CD4-positive, alpha-beta memory T cell (primary cell): ENCODE measurements at regions of chr9 and their contacts with region 1.

Region 1: DNA sequence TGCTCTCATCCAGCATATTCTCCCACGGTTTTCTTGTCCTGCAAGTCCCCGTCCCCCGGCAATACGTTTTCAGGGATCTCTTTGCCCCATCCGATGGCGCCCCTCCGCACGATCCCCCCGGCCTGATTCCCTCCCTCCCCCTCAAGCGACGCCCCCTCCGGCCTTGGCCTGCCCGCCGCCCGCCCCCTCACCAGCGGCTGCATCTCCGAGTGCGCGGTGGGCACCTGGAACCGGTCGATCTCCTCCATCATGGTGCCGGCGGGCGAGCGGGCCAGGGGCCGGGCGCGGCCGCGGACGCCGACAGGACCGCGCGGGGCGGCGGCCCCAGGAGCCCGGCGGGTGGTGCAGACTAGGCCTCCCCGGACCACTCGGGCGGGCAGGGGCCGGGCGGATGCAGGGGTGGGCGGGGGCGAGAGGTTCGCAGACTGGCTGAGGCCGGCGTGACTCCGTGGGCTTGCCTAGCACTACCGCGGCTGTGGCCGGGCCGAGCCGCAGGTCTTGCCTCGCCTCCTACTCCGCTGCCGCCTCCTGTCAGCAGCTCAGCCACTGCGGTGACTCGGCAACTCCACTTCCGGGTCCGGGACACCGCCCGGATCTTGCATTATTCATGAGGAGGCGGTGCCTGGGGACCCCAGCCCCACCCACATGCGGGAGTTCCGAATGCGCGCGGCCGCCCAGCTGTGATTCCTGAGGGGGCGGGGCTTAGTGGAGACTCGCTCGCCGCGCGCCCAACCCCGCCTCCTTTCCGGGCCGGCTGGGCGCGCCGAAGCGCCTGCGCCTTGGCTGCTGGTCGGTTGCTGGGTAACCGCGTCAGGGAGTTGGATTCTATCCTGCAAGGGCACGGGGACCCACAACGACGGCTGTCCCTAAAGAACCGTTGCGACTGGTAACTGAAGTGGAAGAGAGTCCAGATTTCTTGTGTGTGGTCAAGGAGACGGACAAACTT is at the starts of genes DNAI1 and FAM219A:
- DNase-seq: peak; percentile 98 to 100 (median 99)
- H3K4me3 ChIP-seq: peak within 1 kb of the TSS; percentile 44 to 61
- H3K4me3 Mint-ChIP-seq: peak within 1 kb of the TSS; percentile 90 to 95 (median 92)
- H3K27ac ChIP-seq: peak within 1 kb of the TSS; percentile 5
- H3K27ac Mint-ChIP-seq: peak within 1 kb of the TSS; percentile 49 to 90 (median 88)
- H3K4me1 ChIP-seq: peaks cover 19% of the 10 kb centered on the region
- H3K4me1 Mint-ChIP-seq: peaks cover 18 to 30% (median 24%) of the 10 kb centered on the region in 4 donors
- H3K27me3 ChIP-seq: no peaks in the 10 kb centered on the region
- H3K27me3 Mint-ChIP-seq: no peaks in the 10 kb centered on the region
- total RNA-seq, gene DNAI1: not detected
- total RNA-seq, gene FAM219A: 13.9 to 16.3 TPM

Region 2: GRCh38 chr9:34059281-34059680 is 399.0 kb before region 1 on chr9:
- CTCF ChIA-PET with region 1: no interaction called
- POLR2A ChIA-PET with region 1: no interaction called
- intact Hi-C with region 1: no loop called
- DNase-seq: no peak
- H3K4me3 ChIP-seq: no peak overlapping the region
- H3K4me3 Mint-ChIP-seq: no peak overlapping the region
- H3K27ac ChIP-seq: no peak overlapping the region
- H3K27ac Mint-ChIP-seq: no peak overlapping the region
- H3K4me1 ChIP-seq: no peaks in the 10 kb centered on the region
- H3K4me1 Mint-ChIP-seq: no peaks in the 10 kb centered on the region
- H3K27me3 ChIP-seq: no peaks in the 10 kb centered on the region
- H3K27me3 Mint-ChIP-seq: no peaks in the 10 kb centered on the region

Region 3: DNA sequence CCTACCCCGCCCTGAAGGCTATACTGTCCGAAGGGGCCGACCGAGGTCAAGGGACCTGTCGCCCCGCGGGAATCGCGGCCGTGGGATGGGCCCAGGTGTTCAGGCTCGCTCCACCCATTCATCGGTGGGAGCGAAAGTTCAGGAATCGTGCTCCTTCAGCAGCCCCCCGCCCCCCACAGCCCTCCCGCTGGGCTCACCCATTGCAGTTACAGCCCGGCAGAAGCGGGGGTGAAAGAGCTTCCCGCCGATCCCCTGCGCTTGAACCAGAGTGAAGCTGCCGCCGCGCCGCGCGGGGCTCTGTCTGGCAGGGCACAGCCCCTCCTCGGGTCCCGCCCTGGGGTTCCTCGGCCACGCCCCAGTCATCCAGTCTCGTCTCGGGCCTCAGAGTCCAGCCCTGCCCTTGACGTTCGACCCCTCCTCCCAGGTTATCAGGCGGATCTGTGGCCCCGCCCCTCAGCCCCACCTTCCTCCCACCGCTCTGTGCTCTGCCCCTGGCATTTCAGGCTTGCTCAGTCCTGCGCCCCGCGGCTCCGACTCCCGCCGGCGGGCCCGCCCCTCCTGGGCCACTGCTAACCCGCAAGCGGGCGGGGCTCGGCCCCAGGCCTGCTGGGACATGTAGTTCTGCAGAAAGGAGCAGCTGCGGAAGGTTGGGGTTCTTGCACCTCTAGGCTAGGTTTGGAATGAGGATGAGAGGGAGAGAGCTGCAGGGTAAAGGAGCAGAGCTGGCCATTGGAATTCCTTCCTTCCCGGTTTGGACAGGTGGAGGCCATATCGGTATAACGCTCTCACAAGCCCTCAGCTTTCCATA is 81.5 kb before region 1 on chr9 and contains the start of gene MYORG:
- CTCF ChIA-PET with region 1: no interaction called
- POLR2A ChIA-PET with region 1: interaction called, 6 read pairs
- intact Hi-C with region 1: loop called (anchors 1 kb)
- DNase-seq: peak; percentile 94 to 98 (median 96)
- H3K4me3 ChIP-seq: peak within 1 kb of the TSS; percentile 70 to 77
- H3K4me3 Mint-ChIP-seq: peak within 1 kb of the TSS; percentile 92 to 98 (median 94)
- H3K27ac ChIP-seq: peak within 1 kb of the TSS; percentile 49
- H3K27ac Mint-ChIP-seq: peak within 1 kb of the TSS; percentile 58 to 97 (median 93)
- H3K4me1 ChIP-seq: peaks cover 39% of the 10 kb centered on the region
- H3K4me1 Mint-ChIP-seq: peaks cover 33 to 54% (median 44%) of the 10 kb centered on the region in 4 donors
- H3K27me3 ChIP-seq: no peaks in the 10 kb centered on the region
- H3K27me3 Mint-ChIP-seq: no peaks in the 10 kb centered on the region
- total RNA-seq, gene MYORG: 1.3 to 1.4 TPM

Region 4: DNA sequence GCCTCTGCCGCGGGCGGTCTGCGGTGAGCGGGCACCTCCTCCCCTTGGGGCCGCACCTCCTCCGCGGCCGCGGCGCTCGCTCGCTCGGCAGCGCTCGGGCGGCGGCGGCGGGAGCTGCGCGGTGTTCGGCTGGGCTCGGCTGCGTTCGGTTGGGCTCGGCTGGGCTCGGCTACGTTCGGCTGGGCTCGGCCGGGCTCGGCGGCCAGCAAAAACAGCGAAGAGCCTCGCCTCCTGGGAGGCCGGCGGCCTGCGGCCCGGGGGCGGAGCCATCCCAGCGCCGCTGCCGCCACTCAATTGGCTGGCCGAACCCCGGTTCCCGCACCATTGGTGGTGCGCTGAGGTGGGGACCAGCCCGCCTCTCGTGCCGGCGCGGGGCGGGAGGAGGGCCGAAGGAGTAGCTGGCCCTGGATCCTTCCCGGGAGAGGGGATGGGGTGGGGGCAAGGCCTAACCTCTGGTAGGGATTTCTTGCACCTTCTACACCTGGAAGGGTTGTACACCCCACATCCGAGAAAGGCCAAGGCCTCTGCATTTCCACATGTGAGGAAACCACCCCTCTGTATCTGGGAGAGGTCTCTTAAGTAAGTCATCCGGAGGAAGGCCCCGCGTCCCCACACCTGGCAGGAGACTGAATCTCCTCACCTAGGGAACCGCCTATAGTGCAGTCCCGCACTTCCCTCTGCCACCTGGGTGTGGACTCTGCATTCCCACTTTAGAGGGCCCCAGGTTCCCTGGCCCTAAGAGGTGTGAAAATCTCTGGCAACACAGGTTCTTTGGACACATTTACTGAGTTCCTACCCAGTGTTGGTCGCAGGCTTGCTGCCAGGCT is 64.9 kb after region 1 on chr9 and contains the start of gene ENHO:
- CTCF ChIA-PET with region 1: no interaction called
- POLR2A ChIA-PET with region 1: interaction called, 8 read pairs
- intact Hi-C with region 1: loop called (anchors 1 kb)
- DNase-seq: peak; percentile 85 to 96 (median 91)
- H3K4me3 ChIP-seq: peak within 1 kb of the TSS; percentile 29 to 58
- H3K4me3 Mint-ChIP-seq: peak within 1 kb of the TSS; percentile 54 to 89 (median 81)
- H3K27ac ChIP-seq: peak within 1 kb of the TSS; percentile 44
- H3K27ac Mint-ChIP-seq: peak within 1 kb of the TSS in 5 of 7 donors; percentile 50 to 85 (median 68)
- H3K4me1 ChIP-seq: peaks cover 12% of the 10 kb centered on the region
- H3K4me1 Mint-ChIP-seq: peaks cover 6 to 13% (median 8%) of the 10 kb centered on the region in 4 donors
- H3K27me3 ChIP-seq: no peaks in the 10 kb centered on the region
- H3K27me3 Mint-ChIP-seq: peaks cover 1 to 5% of the 10 kb centered on the region in 2 donors
- total RNA-seq, gene ENHO: not detected

Region 5: GRCh38 chr9:34611829-34612630 is 153.7 kb after region 1 on chr9 and contains the start of gene RPP25L:
- CTCF ChIA-PET with region 1: no interaction called
- POLR2A ChIA-PET with region 1: no interaction called
- intact Hi-C with region 1: loop called (anchors 1 kb)
- DNase-seq: peak; percentile 83 to 89 (median 86)
- H3K4me3 ChIP-seq: peak within 1 kb of the TSS; percentile 81 to 88
- H3K4me3 Mint-ChIP-seq: peak within 1 kb of the TSS; percentile 87 to 99 (median 92)
- H3K27ac ChIP-seq: peak within 1 kb of the TSS; percentile 71
- H3K27ac Mint-ChIP-seq: peak within 1 kb of the TSS; percentile 83 to 97 (median 96)
- H3K4me1 ChIP-seq: peaks cover 19% of the 10 kb centered on the region
- H3K4me1 Mint-ChIP-seq: peaks cover 7 to 35% (median 25%) of the 10 kb centered on the region in 4 donors
- H3K27me3 ChIP-seq: no peaks in the 10 kb centered on the region
- H3K27me3 Mint-ChIP-seq: no peaks in the 10 kb centered on the region
- total RNA-seq, gene RPP25L: 28.5 to 28.9 TPM

Region 6: DNA sequence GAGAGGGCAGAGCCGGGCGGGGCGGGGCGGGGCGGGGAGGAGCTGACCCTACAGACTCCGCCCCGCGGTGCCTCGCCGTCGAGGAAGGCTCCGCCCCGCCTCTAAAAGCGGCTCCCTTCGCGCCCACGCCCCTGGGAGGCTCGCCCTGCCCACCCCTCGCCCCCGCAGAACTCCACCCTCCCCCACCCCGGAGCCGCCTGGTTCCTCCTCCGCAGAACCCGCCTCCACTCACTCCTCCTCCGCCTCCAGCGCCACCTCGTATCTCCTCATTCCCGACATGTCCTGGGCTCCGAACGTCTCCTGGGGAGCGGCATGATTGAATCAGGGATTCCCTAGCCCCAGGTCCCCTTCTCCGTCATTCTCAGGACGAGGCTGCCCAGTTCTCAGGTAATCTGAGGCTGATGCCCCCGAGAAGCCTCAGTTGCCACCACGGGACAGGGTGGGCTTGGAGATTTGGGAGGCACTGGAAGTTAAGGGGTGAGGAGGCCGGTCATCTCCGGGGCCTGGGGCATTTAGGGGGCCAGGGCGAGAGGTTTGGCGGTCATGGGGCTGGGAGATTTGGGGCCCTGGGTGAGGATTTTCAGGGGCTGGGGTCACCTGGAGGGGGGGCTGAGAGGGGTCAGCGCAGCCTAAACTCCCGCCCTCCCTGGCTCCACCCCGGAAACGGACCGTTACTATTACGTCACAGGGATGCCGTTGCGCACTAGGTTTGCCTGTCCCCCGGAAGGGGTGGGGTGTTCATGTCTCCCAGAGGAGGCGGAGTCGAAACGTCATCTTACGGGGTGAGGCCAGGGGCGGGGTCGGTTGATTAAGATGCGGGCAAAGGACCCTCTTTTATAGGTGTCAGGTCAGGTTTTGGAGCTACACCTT is 207.3 kb after region 1 on chr9:
- CTCF ChIA-PET with region 1: no interaction called
- POLR2A ChIA-PET with region 1: interaction called, 3 read pairs
- intact Hi-C with region 1: loop called (anchors 1 kb)
- DNase-seq: peak; percentile 87 to 94 (median 89)
- H3K4me3 ChIP-seq: peak overlapping the region; percentile 75 to 95
- H3K4me3 Mint-ChIP-seq: peak overlapping the region; percentile 85 to 97 (median 93)
- H3K27ac ChIP-seq: peak overlapping the region; percentile 98
- H3K27ac Mint-ChIP-seq: peak overlapping the region; percentile 95 to 99 (median 99)
- H3K4me1 ChIP-seq: peaks cover 59% of the 10 kb centered on the region
- H3K4me1 Mint-ChIP-seq: peaks cover 41 to 65% (median 53%) of the 10 kb centered on the region in 4 donors
- H3K27me3 ChIP-seq: no peaks in the 10 kb centered on the region
- H3K27me3 Mint-ChIP-seq: no peaks in the 10 kb centered on the region

Region 7: DNA sequence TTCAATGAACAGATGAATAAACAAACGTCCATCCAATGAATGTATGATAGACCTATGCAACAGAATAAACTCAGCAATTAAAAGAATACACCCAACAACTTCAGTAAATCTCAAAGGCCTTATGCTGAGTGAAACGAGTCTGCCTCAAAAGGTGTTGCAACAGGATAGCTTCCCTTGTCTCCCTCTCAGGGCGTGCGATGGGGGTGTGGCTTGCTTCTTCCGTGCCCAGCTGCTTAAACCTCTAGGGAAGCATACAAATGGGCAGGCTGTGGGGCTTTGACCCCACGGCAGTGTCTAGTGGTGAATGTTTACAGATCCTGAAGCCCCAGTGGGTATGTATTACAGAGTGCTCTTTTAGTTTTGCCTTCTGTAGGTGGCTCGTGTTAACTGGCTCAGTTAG is 338.6 kb after region 1 on chr9:
- CTCF ChIA-PET with region 1: no interaction called
- POLR2A ChIA-PET with region 1: no interaction called
- intact Hi-C with region 1: no loop called
- DNase-seq: no peak
- H3K4me3 ChIP-seq: no peak overlapping the region
- H3K4me3 Mint-ChIP-seq: no peak overlapping the region
- H3K27ac ChIP-seq: no peak overlapping the region
- H3K27ac Mint-ChIP-seq: no peak overlapping the region
- H3K4me1 ChIP-seq: no peaks in the 10 kb centered on the region
- H3K4me1 Mint-ChIP-seq: no peaks in the 10 kb centered on the region
- H3K27me3 ChIP-seq: peaks cover 13% of the 10 kb centered on the region
- H3K27me3 Mint-ChIP-seq: peaks cover 29 to 40% of the 10 kb centered on the region in 2 donors